ENCODE measurements at regions of chr19 and their contacts with region 1.

Region 1: DNA sequence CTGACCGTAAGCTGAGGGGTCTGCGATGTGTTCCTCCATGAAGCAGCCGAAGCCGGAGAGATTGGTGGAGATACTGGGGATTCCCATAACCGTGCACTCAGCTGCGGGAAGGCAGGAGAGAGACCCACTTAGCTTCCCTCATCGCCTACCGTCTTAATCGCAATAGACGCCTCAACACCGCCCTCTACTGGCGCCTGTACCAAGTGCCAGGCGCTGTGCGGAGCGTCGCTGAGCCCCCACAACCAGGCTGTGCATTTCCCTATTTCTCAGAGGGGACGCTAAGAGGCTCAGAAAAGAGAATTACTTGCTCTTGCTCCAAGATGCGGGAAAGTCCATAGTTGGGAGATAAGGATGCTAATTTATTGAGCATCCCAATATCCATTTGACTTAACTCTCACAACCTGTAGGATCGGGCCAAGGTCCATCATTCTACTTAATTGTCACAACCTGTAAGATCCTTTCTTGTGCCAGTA is 5.8 kb downstream of the FTL start:
- DNase-seq: peak; percentile 77
- CTCF ChIP-seq: peak; percentile 93

Region 2: GRCh38 chr19:48806818-48807589 is 164.0 kb before region 1 on chr19:
- CTCF ChIA-PET with region 1: interaction called, 12 read pairs
- POLR2A ChIA-PET with region 1: no interaction called
- DNase-seq: no peak
- CTCF ChIP-seq: no peak

Region 3: GRCh38 chr19:48881741-48882657 is 89.0 kb before region 1 on chr19:
- CTCF ChIA-PET with region 1: interaction called, 17 read pairs
- POLR2A ChIA-PET with region 1: interaction called, 16 read pairs
- DNase-seq: no peak
- CTCF ChIP-seq: no peak

Region 4: GRCh38 chr19:48954595-48955310 is 16.2 kb before region 1 on chr19 and contains the start of gene BAX:
- CTCF ChIA-PET with region 1: interaction called, 11 read pairs
- POLR2A ChIA-PET with region 1: interaction called, 14 read pairs
- DNase-seq: peak; percentile 98
- CTCF ChIP-seq: no peak

Region 5: GRCh38 chr19:48982280-48982679 is 11.3 kb after region 1 on chr19:
- CTCF ChIA-PET with region 1: interaction called, 47 read pairs
- POLR2A ChIA-PET with region 1: interaction called, 28 read pairs
- DNase-seq: no peak
- CTCF ChIP-seq: no peak

Region 6: GRCh38 chr19:49073514-49074378 is 102.8 kb after region 1 on chr19:
- CTCF ChIA-PET with region 1: no interaction called
- POLR2A ChIA-PET with region 1: no interaction called
- DNase-seq: no peak
- CTCF ChIP-seq: peak; percentile 12